ENCODE measurements at regions of chr2 and their contacts with region 1.

Region 1: GRCh38 chr2:37231241-37232130 is at the starts of genes CEBPZ and NDUFAF7:
- DNase-seq: peak; percentile 96
- H3K4me3 Mint-ChIP-seq: no peak within 1 kb of the TSS
- H3K27ac Mint-ChIP-seq: no peak within 1 kb of the TSS
- H3K4me1 Mint-ChIP-seq: peaks cover 40% of the 10 kb centered on the region
- H3K27me3 Mint-ChIP-seq: no peaks in the 10 kb centered on the region
- total RNA-seq, gene CEBPZ: 61.4 to 65.0 TPM
- total RNA-seq, gene NDUFAF7: 17.5 to 18.2 TPM

Region 2: GRCh38 chr2:36966370-36967235 is 264.9 kb before region 1 on chr2 and contains the start of gene STRN:
- CTCF ChIA-PET with region 1: no interaction called
- intact Hi-C with region 1: loop called (anchors 1 kb)
- DNase-seq: peak; percentile 96
- H3K4me3 Mint-ChIP-seq: peak within 1 kb of the TSS; percentile 94
- H3K27ac Mint-ChIP-seq: peak within 1 kb of the TSS; percentile 90
- H3K4me1 Mint-ChIP-seq: peaks cover 33% of the 10 kb centered on the region
- H3K27me3 Mint-ChIP-seq: no peaks in the 10 kb centered on the region
- total RNA-seq, gene STRN: 19.3 to 22.2 TPM

Region 3: DNA sequence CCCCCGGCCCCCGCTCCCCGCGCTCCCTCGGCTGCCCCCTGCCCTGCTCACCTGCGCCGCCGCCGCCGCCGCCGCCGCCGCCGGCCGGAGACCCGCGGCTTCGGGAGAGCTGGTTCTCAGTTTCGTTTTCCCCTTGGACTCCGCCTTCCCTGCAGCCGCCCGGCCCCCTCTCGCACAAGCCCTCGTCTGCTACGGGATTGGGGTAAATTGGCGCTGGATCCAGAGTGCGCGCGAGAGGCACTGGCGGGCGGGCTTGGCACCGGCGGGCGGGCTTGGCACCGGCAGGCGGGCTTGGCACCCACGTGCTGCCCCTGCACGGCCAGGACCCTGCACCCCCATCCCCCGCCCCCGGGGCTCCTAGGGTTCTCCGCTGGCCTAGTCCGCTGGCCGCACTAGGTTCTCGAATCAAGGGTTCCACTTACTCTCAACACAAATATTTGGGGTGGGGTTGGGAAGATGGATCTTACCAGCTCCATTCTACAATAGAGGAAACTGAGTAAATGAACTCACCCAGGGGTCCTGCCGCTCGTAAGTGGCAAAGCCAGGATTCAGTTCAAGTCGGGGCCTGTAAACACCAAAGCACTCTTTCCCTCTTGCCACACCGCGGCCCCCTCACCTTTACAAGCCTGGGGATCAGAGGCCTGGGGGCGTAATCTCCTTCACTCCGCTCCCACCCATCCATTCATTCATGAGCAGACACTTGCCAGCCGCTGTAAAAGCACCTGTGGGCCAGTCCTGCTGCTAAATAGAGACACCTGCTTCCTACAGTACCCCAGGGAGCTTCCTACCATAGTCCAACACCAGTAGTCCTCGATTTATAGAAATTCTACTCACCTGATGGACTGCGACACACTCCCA is 74.4 kb before region 1 on chr2 and contains the start of gene EIF2AK2:
- CTCF ChIA-PET with region 1: no interaction called
- intact Hi-C with region 1: loop called (anchors 5 kb)
- DNase-seq: peak; percentile 80
- H3K4me3 Mint-ChIP-seq: peak within 1 kb of the TSS; percentile 86
- H3K27ac Mint-ChIP-seq: peak within 1 kb of the TSS; percentile 85
- H3K4me1 Mint-ChIP-seq: peaks cover 30% of the 10 kb centered on the region
- H3K27me3 Mint-ChIP-seq: no peaks in the 10 kb centered on the region
- total RNA-seq, gene EIF2AK2: 54.5 to 55.7 TPM

Region 4: DNA sequence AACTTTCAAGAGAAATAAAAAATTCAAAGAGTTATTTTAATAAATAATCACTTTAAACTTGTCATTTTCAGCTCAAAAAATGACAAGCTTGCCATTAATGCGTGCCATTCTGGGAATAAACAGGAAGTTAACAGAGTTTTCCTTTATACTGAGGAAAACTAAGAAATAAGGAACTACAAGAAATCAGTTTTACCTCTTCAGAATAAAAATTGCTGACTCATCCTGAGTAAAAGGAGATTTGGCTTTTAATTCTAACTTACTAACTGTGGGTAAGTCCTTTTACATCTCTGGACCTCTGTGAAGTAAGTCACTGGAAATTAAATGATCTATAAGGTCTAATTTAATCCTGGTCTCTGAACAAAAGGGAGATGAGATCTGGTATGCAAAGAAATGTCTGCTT is 16.2 kb before region 1 on chr2:
- CTCF ChIA-PET with region 1: interaction called, 4 read pairs
- intact Hi-C with region 1: loop called (anchors 2 kb)
- DNase-seq: no peak
- H3K4me3 Mint-ChIP-seq: no peak overlapping the region
- H3K27ac Mint-ChIP-seq: peak overlapping the region; percentile 75
- H3K4me1 Mint-ChIP-seq: peaks cover 7% of the 10 kb centered on the region
- H3K27me3 Mint-ChIP-seq: no peaks in the 10 kb centered on the region

Region 5: DNA sequence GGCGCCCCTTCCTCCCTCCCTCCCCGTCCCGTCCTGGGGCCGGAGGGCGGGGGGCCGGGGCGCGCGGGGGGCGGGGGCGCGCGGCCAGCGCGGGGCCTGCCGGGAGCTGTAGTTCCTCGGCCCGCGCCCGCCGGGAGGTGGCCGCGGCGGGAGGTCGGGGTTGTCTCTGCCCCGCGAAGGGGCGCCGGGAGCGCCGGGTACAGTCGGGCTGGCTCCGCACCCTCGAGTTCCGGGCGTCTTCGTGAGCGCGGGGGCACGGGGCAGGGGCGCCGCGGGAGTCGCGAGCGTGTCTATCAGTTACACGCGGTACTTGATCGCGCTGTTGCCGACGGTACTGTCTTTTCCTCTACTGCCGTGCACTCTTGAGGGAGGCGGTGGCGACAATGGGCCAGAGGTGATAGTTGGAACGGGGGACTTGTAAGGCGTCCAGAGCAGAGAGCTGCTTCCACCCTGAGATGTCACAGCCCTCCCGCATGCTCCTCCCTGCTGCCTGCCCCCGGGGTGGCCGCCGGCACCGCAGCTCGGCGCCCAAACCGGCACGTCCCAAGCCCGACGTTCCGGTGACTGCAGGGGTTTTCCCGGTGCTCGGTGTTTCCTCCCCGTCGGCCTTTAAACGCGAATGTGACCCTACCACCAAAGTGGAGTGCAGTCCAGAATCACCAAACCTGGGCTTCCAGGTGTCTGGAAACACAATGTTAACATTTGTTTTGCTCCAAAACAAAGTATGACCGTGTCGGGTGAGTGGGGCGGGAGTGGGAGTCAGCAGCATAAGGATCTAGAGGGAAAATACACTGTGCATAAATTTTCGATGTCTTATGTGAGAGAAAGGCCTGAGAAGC is 93.5 kb after region 1 on chr2 and contains the start of gene PRKD3:
- CTCF ChIA-PET with region 1: no interaction called
- intact Hi-C with region 1: loop called (anchors 1 kb)
- DNase-seq: peak; percentile 51
- H3K4me3 Mint-ChIP-seq: peak within 1 kb of the TSS; percentile 93
- H3K27ac Mint-ChIP-seq: peak within 1 kb of the TSS; percentile 84
- H3K4me1 Mint-ChIP-seq: peaks cover 29% of the 10 kb centered on the region
- H3K27me3 Mint-ChIP-seq: peaks cover 17% of the 10 kb centered on the region
- total RNA-seq, gene PRKD3: 13.0 TPM

Region 6: DNA sequence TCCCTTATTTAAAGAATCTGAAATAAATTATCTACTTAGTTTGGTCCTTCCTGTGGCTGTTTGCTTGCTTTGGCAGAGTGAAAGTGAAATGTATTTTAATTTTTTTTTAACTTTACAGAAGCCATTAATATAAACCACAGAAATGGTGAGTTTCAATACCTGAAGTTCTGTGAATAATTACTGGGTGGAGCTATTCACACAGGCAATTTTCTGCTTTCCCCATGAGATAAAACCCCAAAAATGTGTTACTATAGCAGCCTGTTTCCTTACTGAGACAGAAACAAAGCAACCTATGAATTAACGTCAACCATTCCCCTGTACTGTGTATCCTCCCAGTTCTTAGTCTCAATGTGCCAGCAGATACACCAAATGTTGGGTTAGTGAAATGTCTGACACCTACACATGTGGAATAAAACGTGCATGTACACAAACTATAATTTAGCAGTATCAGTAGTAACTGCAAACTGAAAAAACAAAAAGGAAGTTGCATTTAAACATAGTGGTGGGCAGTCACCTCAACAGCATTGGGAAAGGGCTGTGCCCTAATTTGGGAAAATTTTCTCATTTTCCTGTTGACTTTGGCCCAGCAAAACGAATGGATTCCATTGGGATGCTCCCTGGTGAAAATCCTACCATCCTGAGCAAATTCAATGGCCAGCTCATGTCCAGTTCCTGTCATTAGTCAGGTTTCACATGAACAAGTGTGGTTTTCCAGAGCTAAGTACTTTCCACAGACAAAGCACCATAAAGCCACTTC is 620.5 kb after region 1 on chr2:
- CTCF ChIA-PET with region 1: no interaction called
- intact Hi-C with region 1: loop called (anchors 5 kb)
- DNase-seq: no peak
- H3K4me3 Mint-ChIP-seq: peak overlapping the region; percentile 17
- H3K27ac Mint-ChIP-seq: peak overlapping the region; percentile 81
- H3K4me1 Mint-ChIP-seq: peaks cover 26% of the 10 kb centered on the region
- H3K27me3 Mint-ChIP-seq: peaks cover 6% of the 10 kb centered on the region

Measured in activated naive CD4-positive, alpha-beta T cell treated with anti-CD3 and anti-CD28 coated beads for 36 hours (primary cell).